ENCODE measurements at regions of chr3 and their contacts with region 1.

Region 1: DNA sequence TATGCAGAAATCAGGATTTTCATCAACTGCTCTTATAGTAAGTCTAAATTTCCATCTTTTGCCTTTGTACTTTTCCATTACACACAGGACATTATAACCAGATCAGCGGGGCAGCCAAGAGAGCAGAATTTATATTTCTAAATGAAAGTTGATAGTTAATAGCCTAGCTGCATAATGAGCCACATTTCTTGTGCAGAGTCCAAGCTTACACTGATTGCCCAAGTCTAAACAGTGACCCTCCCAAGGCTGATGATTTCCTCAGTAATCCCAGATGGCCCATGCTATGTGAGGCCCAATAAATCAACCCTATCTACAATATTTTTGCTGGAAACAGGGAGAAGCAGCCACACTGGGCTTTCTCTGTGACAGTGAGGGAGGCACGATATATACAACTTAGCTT is 475.8 kb upstream of the KCNMB2 start:
- DNase-seq: no peak
- H3K4me3 ChIP-seq: no peak overlapping the region
- H3K27ac ChIP-seq: no peak overlapping the region
- H3K4me1 ChIP-seq: peaks cover 20% of the 10 kb centered on the region
- H3K27me3 ChIP-seq: no peaks in the 10 kb centered on the region
- CTCF ChIP-seq: no peak

Region 2: DNA sequence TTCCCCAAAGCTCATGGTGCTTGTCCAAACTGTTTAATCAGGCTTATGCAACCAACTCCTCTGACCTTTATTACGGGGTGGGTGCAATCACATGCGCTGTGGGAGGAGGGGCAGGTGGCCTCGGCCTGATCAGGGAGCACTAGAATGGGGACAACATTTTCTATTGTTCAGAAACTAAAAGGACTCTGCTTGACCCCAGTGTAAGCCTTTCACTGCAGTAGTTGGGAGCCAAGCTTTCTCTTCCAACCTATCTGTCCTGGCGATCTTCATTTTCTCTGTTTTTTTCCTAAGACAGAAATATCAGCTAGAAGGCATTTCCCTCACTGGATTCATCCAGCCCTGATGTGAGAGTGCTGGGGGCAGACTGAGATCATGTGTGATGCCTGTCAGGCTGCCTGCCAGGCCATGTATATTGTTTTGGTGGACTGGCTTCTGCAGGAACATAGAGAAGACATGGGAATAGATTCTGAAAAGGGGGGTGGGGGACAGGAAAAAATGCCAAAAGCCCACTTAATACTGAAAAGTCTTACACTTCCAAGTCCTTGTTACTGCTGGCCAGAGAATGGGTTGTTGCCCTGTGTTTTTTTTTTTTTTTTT is 236.1 kb before region 1 on chr3:
- CTCF ChIA-PET with region 1: no interaction called
- POLR2A ChIA-PET with region 1: interaction called, 11 read pairs
- intact Hi-C with region 1: no loop called
- DNase-seq: no peak
- H3K4me3 ChIP-seq: no peak overlapping the region
- H3K27ac ChIP-seq: no peak overlapping the region
- H3K4me1 ChIP-seq: no peaks in the 10 kb centered on the region
- H3K27me3 ChIP-seq: no peaks in the 10 kb centered on the region
- CTCF ChIP-seq: no peak